Sigmoid colon (tissue), 7 donors: ENCODE measurements at regions of chr11 and their contacts with region 1.

Region 1: DNA sequence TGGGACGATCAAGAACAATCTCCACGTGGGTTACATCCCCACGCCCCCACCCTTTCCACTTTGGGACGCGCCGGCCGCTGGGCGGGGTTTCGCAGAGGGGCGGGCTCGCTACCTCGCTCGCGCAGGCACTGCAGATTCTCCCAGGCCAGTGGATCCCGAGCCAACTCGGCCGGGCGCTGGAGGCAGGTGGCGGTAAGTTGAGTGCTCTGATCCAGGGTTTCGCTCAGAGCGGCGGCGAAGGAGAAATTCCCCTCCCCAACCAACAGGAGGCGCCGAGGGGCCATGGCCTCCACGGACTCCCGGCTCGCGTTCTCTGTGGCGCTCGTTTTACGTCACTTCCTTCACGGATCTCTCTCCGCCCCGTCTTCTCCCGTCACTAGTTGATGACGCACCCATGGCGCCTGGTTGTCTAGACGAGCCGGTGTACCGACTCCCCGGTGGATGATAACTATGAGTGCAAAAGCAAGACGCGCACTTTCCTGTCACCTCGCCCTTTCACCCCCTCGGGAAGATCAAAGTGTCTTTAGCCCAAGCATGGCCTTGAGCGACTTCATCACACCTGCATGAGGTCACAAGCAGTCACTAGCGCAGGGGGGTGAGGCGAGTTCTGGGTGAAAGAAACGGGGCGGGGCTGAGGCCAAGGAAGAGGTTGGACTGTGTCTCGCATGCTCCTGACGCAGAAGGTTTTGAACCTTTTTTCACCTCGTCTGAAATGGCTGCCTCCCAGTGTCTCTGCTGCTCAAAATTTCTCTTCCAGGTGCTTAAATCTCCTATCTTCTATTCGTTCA is at the starts of genes CFAP68 and FDXACB1:
- DNase-seq: peak; percentile 99
- H3K4me3 ChIP-seq: peak within 1 kb of the TSS; percentile 44 to 65 (median 58)
- H3K27ac ChIP-seq: peak within 1 kb of the TSS; percentile 89 to 97 (median 92)
- H3K4me1 ChIP-seq: peaks cover 0 to 14% (median 10%) of the 10 kb centered on the region in 4 donors
- H3K27me3 ChIP-seq: no peaks in the 10 kb centered on the region
- CTCF ChIP-seq: peak; percentile 96 to 99 (median 98)
- EP300 ChIP-seq: peak in 3 of 4 donors; percentile 80 to 85 (median 81)
- POLR2A ChIP-seq: peak; percentile 70 to 81
- total RNA-seq, gene CFAP68: 9.1 to 44.3 (median 13.4) TPM
- total RNA-seq, gene FDXACB1: 0.54 to 1.7 (median 1.1) TPM

Region 2: DNA sequence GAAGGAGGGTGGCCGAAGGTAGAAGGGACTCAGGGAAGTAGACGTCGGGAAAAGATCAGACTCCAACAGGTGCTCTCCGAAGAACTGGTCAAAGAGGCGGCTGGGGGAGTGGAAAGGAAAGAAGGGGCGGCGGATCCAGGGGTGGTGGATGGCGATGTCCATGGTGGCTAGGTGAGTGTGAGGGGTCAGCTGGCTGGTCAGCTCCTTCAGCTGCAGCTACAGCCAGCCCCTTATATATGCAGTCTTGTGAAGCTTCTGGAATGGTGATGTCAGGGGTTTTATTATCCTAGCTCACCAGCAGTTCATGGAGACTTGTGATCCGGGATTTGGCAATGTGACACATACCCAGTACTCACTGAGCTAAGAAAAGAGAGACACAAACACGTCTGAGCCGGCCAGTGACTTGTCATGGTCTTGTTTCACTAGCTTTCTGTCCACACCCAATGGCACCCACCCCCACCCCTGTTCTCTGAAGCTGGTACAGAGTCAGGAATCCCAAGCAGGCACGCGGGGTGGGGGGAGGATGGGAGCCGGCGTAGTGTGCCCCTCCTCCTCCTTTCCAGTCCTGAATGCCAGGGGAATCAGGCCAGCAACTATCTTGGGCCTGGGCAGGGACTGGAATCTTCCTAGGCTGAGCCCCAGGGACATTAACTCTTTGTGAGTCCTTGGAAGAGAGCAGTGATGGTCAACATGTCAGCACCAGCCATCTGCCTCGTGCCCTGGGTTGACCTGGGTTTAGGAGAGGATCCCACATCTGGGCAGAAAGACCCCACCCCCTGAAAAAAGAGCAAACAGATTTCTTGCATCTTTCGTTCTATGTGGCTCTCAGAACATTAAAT is 32.7 kb after region 1 on chr11 and contains the start of gene CRYAB:
- intact Hi-C with region 1: loop called (anchors 1 kb)
- DNase-seq: peak; percentile 96
- H3K4me3 ChIP-seq: peak within 1 kb of the TSS; percentile 52 to 78 (median 73)
- H3K27ac ChIP-seq: peak within 1 kb of the TSS; percentile 96 to 100 (median 98)
- H3K4me1 ChIP-seq: peaks cover 0 to 39% (median 36%) of the 10 kb centered on the region in 4 donors
- H3K27me3 ChIP-seq: no peaks in the 10 kb centered on the region
- CTCF ChIP-seq: no peak
- EP300 ChIP-seq: peak; percentile 3 to 93 (median 68)
- POLR2A ChIP-seq: peak; percentile 76 to 86
- total RNA-seq, gene CRYAB: 151 to 299 (median 225) TPM

Region 3: DNA sequence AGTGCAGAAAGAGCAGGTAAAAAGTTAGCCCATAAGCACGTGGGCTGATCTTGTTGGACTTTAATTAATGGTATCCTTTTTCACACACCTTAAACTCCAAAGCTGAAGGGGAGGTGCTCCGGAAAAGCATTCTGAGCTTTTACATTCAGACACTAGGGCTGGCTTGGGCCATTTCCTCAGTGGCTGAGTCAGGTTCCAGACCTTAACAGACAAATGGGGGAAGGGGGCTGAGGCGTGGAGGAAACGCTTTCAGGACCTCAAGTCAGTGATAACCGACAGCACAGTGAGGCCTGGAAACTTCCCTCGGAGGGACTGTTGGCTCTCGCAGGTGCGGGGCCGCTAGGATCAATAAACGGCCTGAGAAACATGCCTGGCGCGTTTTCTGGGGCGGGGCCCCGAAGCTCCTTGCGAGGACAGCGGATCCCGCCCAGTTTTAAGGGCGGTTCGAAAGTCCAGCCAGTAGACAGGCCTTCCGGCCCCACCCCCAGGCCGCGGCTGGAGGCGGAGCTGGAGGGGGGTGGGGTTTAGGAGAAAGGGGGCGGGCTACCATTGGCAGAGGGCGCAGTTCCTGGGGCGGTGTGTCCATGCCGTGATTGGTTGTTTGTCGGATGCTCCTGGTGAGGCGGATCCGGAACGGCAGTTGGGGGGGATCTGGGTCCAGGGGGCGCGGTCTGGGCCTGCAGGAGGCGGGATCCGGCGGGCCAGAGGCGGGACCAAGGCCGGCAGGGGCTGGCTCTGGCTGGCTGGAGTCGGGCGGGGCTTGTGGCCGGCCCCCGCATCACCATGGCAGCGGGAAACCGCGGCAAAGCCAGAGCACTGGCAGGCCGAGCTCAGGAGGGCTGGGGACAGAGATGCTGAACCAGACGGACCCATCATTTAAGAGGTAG is 47.7 kb after region 1 on chr11:
- intact Hi-C with region 1: loop called (anchors 2 kb)
- DNase-seq: peak; percentile 98
- H3K4me3 ChIP-seq: peak overlapping the region; percentile 15 to 45 (median 40)
- H3K27ac ChIP-seq: peak overlapping the region; percentile 87 to 92 (median 88)
- H3K4me1 ChIP-seq: peaks cover 0 to 43% (median 38%) of the 10 kb centered on the region in 4 donors
- H3K27me3 ChIP-seq: no peaks in the 10 kb centered on the region
- CTCF ChIP-seq: peak in 1 of 4 experiments; percentile 30
- EP300 ChIP-seq: peak in 2 of 4 donors; percentile 41 to 46
- POLR2A ChIP-seq: peak; percentile 69 to 76

Region 4: DNA sequence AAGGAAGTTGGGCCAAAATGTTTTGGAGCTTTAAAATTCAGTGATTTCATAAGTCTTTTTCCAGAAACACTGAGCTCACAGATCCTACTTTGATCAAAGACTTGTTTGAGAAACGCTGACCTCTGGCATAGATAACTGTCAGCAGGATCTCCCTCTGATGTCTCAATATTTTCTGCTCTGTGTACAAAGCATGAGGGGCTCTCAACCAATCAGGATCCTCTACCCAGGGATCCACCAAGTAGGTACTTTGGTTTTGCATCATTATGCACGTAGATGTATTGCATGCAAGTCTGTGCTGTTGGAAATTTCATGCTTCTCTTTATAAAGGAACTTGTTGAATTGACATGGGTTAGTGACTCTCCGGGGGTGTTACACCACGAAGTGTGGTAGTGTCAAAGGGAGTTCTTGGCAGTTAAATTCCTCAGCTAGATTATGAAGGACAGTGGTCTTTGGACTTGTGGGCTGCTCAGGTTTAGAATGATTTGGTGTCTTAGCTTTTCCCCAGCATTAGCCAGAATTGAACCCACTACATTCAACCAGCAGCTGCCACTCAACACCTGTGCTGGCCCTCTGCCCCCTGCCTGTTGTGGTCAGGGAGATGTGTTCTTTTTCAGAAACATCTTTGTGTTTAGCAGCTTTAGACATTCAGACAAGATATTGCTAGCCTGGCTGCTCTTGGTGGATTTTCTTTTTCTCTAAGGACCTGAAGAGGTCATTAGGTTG is 56.4 kb after region 1 on chr11:
- intact Hi-C with region 1: loop called (anchors 2 kb)
- DNase-seq: no peak
- H3K4me3 ChIP-seq: no peak overlapping the region
- H3K27ac ChIP-seq: peak overlapping the region; percentile 72 to 89 (median 85)
- H3K4me1 ChIP-seq: peaks cover 0 to 53% (median 49%) of the 10 kb centered on the region in 4 donors
- H3K27me3 ChIP-seq: no peaks in the 10 kb centered on the region
- CTCF ChIP-seq: no peak
- EP300 ChIP-seq: no peak
- POLR2A ChIP-seq: no peak

Region 5: GRCh38 chr11:111977146-111978027 is 98.3 kb after region 1 on chr11:
- intact Hi-C with region 1: loop called (anchors 2 kb)
- DNase-seq: peak; percentile 89
- H3K4me3 ChIP-seq: peak overlapping the region; percentile 82 to 97 (median 89)
- H3K27ac ChIP-seq: peak overlapping the region; percentile 95 to 99 (median 97)
- H3K4me1 ChIP-seq: peaks cover 0 to 59% (median 46%) of the 10 kb centered on the region in 4 donors
- H3K27me3 ChIP-seq: no peaks in the 10 kb centered on the region
- CTCF ChIP-seq: no peak
- EP300 ChIP-seq: no peak
- POLR2A ChIP-seq: peak; percentile 5 to 35

Region 6: GRCh38 chr11:112024773-112025678 is 146.0 kb after region 1 on chr11 and contains the start of gene DLAT:
- intact Hi-C with region 1: loop called (anchors 1 kb)
- DNase-seq: peak; percentile 91
- H3K4me3 ChIP-seq: peak within 1 kb of the TSS; percentile 76 to 88 (median 86)
- H3K27ac ChIP-seq: peak within 1 kb of the TSS; percentile 92 to 94 (median 93)
- H3K4me1 ChIP-seq: peaks cover 0 to 14% (median 3%) of the 10 kb centered on the region in 4 donors
- H3K27me3 ChIP-seq: no peaks in the 10 kb centered on the region
- CTCF ChIP-seq: no peak
- EP300 ChIP-seq: no peak
- POLR2A ChIP-seq: peak; percentile 23 to 40
- total RNA-seq, gene DLAT: 23.2 to 34.6 (median 26.0) TPM

Region 7: DNA sequence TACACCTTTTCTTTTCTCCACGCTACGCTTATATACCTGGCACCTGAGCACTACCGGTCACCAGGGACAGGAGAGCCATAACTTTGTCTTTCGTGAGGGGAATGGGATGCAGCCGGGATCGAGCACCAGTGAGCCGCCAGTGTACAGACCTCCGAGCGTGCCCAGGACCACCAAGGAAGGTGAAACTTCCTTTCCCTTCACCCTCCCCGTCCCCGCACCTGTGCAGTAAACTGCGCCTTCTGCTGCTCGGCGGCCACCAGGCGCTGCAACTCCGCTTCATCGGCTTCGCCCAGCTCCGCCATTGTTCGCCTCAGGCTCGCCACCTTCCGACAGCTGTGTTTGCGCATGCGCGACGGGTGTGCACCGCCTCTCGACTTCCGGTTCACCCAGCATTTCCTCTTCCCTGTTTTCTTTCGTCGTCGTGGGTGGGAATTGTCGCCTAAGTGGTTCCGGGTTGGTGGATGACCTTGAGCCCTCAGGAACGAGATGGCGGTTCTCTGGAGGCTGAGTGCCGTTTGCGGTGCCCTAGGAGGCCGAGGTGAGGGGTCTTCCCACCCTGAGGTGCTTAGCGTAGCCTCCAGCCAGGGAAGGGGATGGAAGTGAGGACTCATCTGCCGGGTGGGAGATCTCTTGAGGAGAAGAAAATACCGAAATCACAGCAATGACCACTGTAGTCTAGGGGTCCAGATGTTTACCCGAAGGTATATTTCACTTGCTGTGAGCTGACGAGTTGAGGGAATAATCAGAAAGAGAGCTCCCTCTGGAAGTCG is 207.6 kb after region 1 on chr11 and contains the starts of genes SDHD and TIMM8B:
- intact Hi-C with region 1: loop called (anchors 5 kb)
- DNase-seq: peak; percentile 98
- H3K4me3 ChIP-seq: peak within 1 kb of the TSS; percentile 74 to 81 (median 75)
- H3K27ac ChIP-seq: peak within 1 kb of the TSS; percentile 81 to 86 (median 82)
- H3K4me1 ChIP-seq: peaks cover 0 to 38% (median 33%) of the 10 kb centered on the region in 4 donors
- H3K27me3 ChIP-seq: no peaks in the 10 kb centered on the region
- CTCF ChIP-seq: peak in 2 of 4 experiments; percentile 20 to 36
- EP300 ChIP-seq: no peak
- POLR2A ChIP-seq: peak; percentile 37 to 53
- total RNA-seq, gene SDHD: 96.4 to 169 (median 134) TPM
- total RNA-seq, gene TIMM8B: 19.1 to 62.1 (median 40.5) TPM